Ovary (tissue), 10 donors: ENCODE measurements at regions of chr2 and their contacts with region 1.

Region 1: DNA sequence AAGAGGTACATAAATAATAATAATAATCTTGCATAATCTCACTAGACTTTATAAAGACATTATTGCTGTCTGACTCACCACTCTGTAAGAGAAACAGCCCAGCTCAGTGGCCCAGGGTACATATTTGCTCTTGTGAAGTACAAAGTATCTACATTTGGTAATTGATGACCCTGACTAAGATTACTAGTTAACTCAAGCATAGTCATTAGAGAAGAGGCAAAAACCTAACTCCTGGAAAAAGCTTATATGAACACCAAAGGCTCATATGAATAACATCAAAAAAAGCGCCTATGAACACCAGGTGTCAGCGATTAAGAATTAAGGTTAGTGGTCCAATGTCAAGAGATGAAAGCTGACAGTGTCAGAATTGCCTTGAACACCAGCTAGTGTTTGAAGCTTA is 38.4 kb downstream of the RAD51AP2 start:
- DNase-seq: no peak
- H3K4me3 ChIP-seq: no peak overlapping the region
- H3K27ac ChIP-seq: no peak overlapping the region
- H3K4me1 ChIP-seq: no peaks in the 10 kb centered on the region
- H3K27me3 ChIP-seq: no peaks in the 10 kb centered on the region
- CTCF ChIP-seq: no peak
- EP300 ChIP-seq: no peak
- POLR2A ChIP-seq: no peak

Region 2: DNA sequence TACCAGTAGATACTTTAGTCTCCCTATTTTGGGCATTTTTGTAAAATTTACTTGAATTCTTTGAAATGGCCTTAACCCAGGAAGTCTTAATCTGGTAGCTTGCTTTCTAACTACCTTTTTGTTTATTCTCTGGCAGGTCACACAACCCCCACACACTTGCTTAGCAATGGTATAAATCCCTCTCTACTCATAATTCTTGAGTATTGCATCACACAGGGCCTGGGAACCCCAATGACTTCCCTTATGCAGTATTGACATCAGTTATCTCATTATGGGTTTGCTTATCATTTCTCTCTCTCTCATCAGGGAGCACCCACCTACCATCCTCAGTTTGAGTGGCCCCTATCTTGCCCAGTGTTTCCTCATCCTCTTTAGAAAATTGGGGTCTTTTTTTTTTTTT is 605.7 kb after region 1 on chr2:
- intact Hi-C with region 1: loop called in 1 of 4 experiments (anchors 10 kb)
- DNase-seq: no peak
- H3K4me3 ChIP-seq: no peak overlapping the region
- H3K27ac ChIP-seq: no peak overlapping the region
- H3K4me1 ChIP-seq: no peaks in the 10 kb centered on the region
- H3K27me3 ChIP-seq: no peaks in the 10 kb centered on the region
- CTCF ChIP-seq: no peak
- EP300 ChIP-seq: no peak
- POLR2A ChIP-seq: no peak